Posterior vena cava (tissue), 2 donors: ENCODE measurements at regions of chr5 and their contacts with region 1.

Region 1: GRCh38 chr5:140168371-140168770 is 6.6 kb upstream of the CYSTM1 start:
- DNase-seq: no peak

Region 2: DNA sequence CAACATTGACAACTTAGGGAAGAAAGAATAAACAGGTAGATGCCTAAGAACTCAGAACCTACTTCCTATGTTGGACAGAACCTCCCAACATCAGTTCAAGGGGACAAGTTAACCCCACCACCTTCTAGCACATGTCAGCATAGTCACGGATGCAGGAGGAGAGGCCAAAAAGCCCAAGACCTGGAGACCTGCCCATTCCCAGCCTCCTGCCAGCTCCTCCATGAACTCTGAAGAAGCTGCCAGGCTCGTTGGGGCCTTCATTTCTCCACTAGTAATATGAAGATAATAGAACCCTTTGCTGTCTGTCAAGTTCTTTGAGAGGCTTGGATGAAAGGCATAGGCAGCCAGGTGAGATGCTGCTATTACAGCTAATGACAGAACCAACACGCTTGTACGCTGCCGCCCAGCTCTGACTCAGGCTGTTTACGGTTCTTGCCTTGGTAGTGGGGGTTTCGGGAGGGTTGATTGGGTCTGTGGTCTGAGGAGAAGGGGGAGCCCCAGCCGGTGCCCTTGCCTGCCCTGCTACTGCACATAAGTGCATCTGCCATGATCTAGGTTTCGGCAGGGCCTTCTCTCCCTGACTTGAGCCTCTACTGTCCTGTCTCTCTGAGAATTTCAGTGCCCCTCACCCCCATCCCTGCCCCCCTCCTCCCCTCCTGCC is 207.5 kb before region 1 on chr5:
- intact Hi-C with region 1: no loop called
- DNase-seq: peak; percentile 35

Region 3: GRCh38 chr5:140140435-140140834 is 27.9 kb before region 1 on chr5:
- intact Hi-C with region 1: loop called in 1 of 2 experiments (anchors 1 kb)
- DNase-seq: no peak

Region 4: DNA sequence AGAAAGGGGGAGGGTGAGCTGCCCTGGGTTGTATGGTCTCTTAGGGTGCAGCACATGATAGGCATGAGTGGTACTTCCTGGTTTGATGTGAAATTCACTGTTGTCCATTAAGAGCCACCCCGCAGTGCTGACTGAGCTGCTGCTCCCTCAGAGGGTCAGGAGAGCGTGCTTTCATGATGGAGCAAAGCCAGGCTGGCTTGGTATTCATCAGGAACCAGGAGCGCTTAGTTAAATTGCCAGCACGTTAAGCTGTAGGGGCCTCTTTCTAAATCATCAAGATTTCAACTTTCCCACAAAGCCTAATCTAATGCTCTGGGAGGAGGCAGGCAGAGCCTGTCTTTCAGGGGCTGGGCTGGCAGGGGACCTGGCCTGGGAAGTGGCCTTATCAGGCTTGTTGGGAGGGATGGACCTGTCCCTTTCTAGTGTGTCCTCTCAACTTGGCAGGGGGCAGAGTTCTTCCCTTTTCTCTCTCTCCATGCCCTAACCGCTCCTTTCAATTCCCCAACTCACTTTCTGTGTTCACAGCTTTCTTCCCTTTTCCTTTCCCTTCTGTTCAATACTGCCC is 14.5 kb after region 1 on chr5:
- intact Hi-C with region 1: no loop called
- DNase-seq: no peak